ENCODE measurements at regions of chr10 and their contacts with region 1.

Region 1: GRCh38 chr10:102009801-102010425 is 46.1 kb downstream of the ARMH3 start:
- DNase-seq: peak; percentile 54 to 85
- H3K4me3 ChIP-seq: no peak overlapping the region
- H3K4me1 ChIP-seq: no peaks in the 10 kb centered on the region
- H3K27me3 ChIP-seq: no peaks in the 10 kb centered on the region

Region 2: GRCh38 chr10:101602761-101603398 is 407.0 kb before region 1 on chr10:
- in situ Hi-C with region 1: loop called (anchors 25 kb)
- DNase-seq: peak; percentile 85 to 91
- H3K4me3 ChIP-seq: no peak overlapping the region
- H3K4me1 ChIP-seq: peaks cover 2% of the 10 kb centered on the region
- H3K27me3 ChIP-seq: no peaks in the 10 kb centered on the region

Region 3: GRCh38 chr10:101839421-101840063 is 170.4 kb before region 1 on chr10:
- in situ Hi-C with region 1: loop called (anchors 5 kb)
- DNase-seq: no peak
- H3K4me3 ChIP-seq: no peak overlapping the region
- H3K4me1 ChIP-seq: peaks cover 3% of the 10 kb centered on the region; the same call in 1 of the 2 replicates
- H3K27me3 ChIP-seq: no peaks in the 10 kb centered on the region

Measured in HAP-1 (cell line).